ENCODE measurements at regions of chr18 and their contacts with region 1.

Region 1: DNA sequence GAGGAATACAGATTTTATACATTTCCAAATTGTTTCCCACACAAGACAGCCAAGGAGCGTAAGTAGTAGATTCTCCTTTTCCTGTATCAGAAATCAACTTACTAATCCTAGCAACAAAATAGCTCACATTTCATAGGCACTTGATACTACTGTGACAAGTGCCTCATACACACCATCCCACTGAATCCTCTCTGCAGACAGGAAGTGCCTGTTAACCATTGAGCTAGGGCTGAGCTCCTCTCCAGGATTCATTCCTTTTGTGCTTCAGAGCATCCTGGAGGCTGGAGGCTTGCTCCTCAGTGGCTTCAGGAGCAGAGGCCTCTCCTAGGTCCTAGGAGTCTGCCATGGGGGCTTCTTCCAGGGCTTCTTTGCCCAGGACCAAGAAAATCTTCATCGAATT is 20.8 kb upstream of the ZNF396 start:
- DNase-seq: no peak
- H3K4me3 ChIP-seq: no peak overlapping the region
- H3K27ac ChIP-seq: no peak overlapping the region
- H3K4me1 ChIP-seq: no peaks in the 10 kb centered on the region
- H3K27me3 ChIP-seq: no peaks in the 10 kb centered on the region; the same call in 1 of the 2 replicates
- CTCF ChIP-seq: no peak
- EP300 ChIP-seq: no peak
- RAD21 ChIP-seq: no peak

Region 2: GRCh38 chr18:34444622-34445021 is 953.4 kb before region 1 on chr18:
- CTCF ChIA-PET with region 1: no interaction called
- POLR2A ChIA-PET with region 1: no interaction called
- DNase-seq: no peak
- H3K4me3 ChIP-seq: no peak overlapping the region
- H3K27ac ChIP-seq: no peak overlapping the region
- H3K4me1 ChIP-seq: no peaks in the 10 kb centered on the region
- H3K27me3 ChIP-seq: no peaks in the 10 kb centered on the region
- CTCF ChIP-seq: no peak
- EP300 ChIP-seq: no peak
- RAD21 ChIP-seq: no peak

Region 3: GRCh38 chr18:35355140-35355618 is 42.8 kb before region 1 on chr18:
- CTCF ChIA-PET with region 1: no interaction called
- POLR2A ChIA-PET with region 1: no interaction called
- DNase-seq: peak; percentile 72
- H3K4me3 ChIP-seq: peak overlapping the region in 1 of 2 experiments; percentile 25; a peak in 3 of 4 replicates
- H3K27ac ChIP-seq: no peak overlapping the region; a peak in 1 of 4 replicates
- H3K4me1 ChIP-seq: peaks cover 0 to 2% of the 10 kb centered on the region in 2 experiments; a peak in 1 of 4 replicates
- H3K27me3 ChIP-seq: no peaks in the 10 kb centered on the region
- CTCF ChIP-seq: peak; percentile 71
- EP300 ChIP-seq: no peak
- RAD21 ChIP-seq: peak; percentile 73

Region 4: GRCh38 chr18:35386600-35387351 is 11.2 kb before region 1 on chr18:
- CTCF ChIA-PET with region 1: interaction called, 20 read pairs
- POLR2A ChIA-PET with region 1: no interaction called
- DNase-seq: peak; percentile 68
- H3K4me3 ChIP-seq: no peak overlapping the region; a peak in 1 of 4 replicates
- H3K27ac ChIP-seq: no peak overlapping the region
- H3K4me1 ChIP-seq: peaks cover 0 to 4% of the 10 kb centered on the region in 2 experiments; a peak in 1 of 4 replicates
- H3K27me3 ChIP-seq: no peaks in the 10 kb centered on the region
- CTCF ChIP-seq: peak; percentile 88
- EP300 ChIP-seq: no peak
- RAD21 ChIP-seq: peak; percentile 76

Region 5: GRCh38 chr18:35775887-35776286 is 377.9 kb after region 1 on chr18:
- CTCF ChIA-PET with region 1: no interaction called
- POLR2A ChIA-PET with region 1: no interaction called
- DNase-seq: no peak
- H3K4me3 ChIP-seq: no peak overlapping the region
- H3K27ac ChIP-seq: no peak overlapping the region
- H3K4me1 ChIP-seq: peaks cover 0 to 12% of the 10 kb centered on the region in 2 experiments; a peak in 1 of 4 replicates
- H3K27me3 ChIP-seq: no peaks in the 10 kb centered on the region
- CTCF ChIP-seq: no peak
- EP300 ChIP-seq: no peak
- RAD21 ChIP-seq: no peak